ENCODE measurements at regions of chr20 and their contacts with region 1.

Region 1: DNA sequence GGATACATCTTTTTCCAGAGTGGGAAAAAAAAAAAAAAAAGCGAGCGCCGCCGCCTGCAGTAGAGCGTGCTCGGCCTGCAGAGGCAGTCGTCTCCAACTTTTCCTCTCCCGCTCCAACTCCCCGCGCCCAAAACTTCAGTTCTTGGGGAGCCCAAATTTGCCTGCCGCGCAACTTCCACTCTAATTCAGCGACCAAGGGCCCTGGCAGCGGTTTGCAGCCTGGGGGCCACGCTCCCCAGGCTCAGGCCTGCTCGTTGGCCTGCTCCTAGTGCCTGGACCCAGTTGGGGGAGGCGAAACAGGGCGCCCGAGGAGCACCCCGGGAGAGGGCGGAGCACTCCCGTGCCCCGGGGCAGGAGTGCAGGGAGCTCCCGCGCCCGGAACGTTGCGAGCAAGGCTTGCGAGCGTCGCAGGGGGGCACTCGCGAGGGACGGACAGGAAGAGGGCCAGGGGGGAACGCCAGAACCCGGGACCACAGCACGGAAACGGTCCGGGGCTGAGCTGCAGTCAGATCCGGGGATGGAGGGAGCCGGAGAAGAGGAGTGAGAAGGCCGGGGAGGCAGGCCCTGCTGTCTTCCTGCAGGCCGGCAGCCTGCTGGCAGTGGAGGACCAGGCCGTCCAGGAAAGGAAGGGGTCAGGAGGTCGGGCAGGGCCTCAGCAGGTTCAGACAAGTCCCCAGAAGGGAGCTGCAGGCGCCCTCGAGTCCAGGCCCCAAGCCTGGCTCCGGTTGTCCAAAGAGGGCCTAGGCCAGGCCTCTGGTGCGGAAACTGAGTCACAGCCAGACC is at the start of gene STX16:
- DNase-seq: peak; percentile 90
- ATAC-seq: peak; percentile 86
- H3K4me3 Mint-ChIP-seq: peak within 1 kb of the TSS; percentile 93
- H3K27ac Mint-ChIP-seq: peak within 1 kb of the TSS; percentile 95
- H3K4me1 Mint-ChIP-seq: peaks cover 14% of the 10 kb centered on the region
- H3K27me3 Mint-ChIP-seq: no peaks in the 10 kb centered on the region
- CTCF ChIP-seq: peak; percentile 89
- total RNA-seq, gene STX16: 108 to 109 TPM

Region 2: GRCh38 chr20:58309575-58310290 is 341.2 kb before region 1 on chr20 and contains the start of gene RAB22A:
- CTCF ChIA-PET with region 1: no interaction called
- POLR2A ChIA-PET with region 1: interaction called, 3 read pairs
- intact Hi-C with region 1: loop called (anchors 5 kb)
- DNase-seq: peak; percentile 84
- ATAC-seq: peak; percentile 50
- H3K4me3 Mint-ChIP-seq: peak within 1 kb of the TSS; percentile 91
- H3K27ac Mint-ChIP-seq: peak within 1 kb of the TSS; percentile 93
- H3K4me1 Mint-ChIP-seq: peaks cover 60% of the 10 kb centered on the region
- H3K27me3 Mint-ChIP-seq: no peaks in the 10 kb centered on the region
- CTCF ChIP-seq: no peak
- total RNA-seq, gene RAB22A: 8.3 to 9.0 TPM

Region 3: GRCh38 chr20:58407966-58408557 is 242.9 kb before region 1 on chr20:
- CTCF ChIA-PET with region 1: no interaction called
- POLR2A ChIA-PET with region 1: no interaction called
- intact Hi-C with region 1: no loop called
- DNase-seq: peak; percentile 43
- ATAC-seq: peak; percentile 87
- H3K4me3 Mint-ChIP-seq: peak overlapping the region; percentile 16
- H3K27ac Mint-ChIP-seq: peak overlapping the region; percentile 87
- H3K4me1 Mint-ChIP-seq: peaks cover 40% of the 10 kb centered on the region
- H3K27me3 Mint-ChIP-seq: no peaks in the 10 kb centered on the region
- CTCF ChIP-seq: no peak

Region 4: DNA sequence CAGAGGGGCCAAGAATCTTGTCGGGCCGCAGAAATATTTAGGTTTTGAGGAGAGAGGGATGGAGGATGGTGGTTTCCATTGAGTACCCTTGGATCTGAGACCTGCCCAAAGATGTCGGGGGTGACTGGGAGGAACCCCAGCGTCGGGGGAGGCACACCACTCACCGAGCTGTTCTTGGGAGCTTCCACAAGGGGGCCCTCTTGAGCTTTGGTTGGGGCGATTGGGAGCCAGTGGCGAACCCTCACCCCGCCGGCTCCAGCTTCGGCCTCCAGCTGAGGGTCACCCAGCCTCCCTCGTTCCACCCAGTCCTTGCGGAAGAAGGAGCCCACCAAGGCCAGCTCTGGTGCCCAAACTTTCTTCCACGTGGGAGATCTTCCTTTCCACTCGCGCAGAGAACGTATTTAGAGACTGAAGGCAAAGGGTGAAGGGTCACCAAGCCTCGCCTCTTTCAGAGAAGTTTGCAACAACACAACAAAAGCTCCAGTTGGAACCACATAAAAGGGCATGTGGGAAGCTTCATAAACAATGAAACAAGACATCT is 169.4 kb before region 1 on chr20:
- CTCF ChIA-PET with region 1: interaction called, 24 read pairs
- POLR2A ChIA-PET with region 1: interaction called, 5 read pairs
- intact Hi-C with region 1: loop called (anchors 10 kb)
- DNase-seq: peak; percentile 68
- ATAC-seq: peak; percentile 94
- H3K4me3 Mint-ChIP-seq: no peak overlapping the region
- H3K27ac Mint-ChIP-seq: no peak overlapping the region
- H3K4me1 Mint-ChIP-seq: no peaks in the 10 kb centered on the region
- H3K27me3 Mint-ChIP-seq: peaks cover 8% of the 10 kb centered on the region
- CTCF ChIP-seq: peak; percentile 86

Region 5: DNA sequence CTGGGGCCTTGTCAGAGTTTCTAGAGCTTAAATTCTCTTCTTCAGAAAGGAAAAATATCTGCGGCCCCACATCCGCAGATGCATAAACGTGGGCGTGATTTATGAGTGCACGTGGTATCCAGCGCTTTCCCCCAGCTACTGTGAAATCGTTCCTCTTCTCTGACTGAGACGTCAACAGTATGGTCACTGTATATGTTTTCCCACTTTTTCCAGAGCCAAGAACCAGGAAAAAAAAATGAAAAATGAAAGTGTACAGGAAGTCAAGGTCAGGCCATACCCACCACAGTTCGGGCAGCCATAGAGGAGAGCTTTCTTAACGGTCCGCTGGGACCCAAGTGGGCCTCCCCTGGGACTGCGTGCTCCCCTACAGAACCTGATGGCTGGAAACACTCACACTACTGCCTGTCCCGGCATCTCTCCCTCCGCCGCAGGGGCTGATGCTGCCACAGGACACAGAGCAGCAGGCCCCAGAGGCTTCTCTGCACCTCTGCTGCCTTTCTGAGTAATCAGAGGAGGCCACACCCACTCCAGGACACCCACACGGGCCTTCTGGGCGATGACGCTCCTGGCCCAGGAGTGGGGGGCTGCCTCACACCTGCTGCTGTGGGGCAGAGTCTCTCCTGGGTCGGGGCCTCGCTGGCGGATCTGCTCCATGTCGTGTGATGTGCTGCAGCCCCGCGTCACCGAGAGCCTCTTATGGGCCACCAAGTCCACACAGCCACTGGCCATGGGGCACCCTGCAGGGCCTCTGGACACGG is 16.3 kb before region 1 on chr20:
- CTCF ChIA-PET with region 1: interaction called, 10 read pairs
- POLR2A ChIA-PET with region 1: interaction called, 16 read pairs
- intact Hi-C with region 1: no loop called
- DNase-seq: peak; percentile 84
- ATAC-seq: peak; percentile 91
- H3K4me3 Mint-ChIP-seq: peak overlapping the region; percentile 60
- H3K27ac Mint-ChIP-seq: peak overlapping the region; percentile 96
- H3K4me1 Mint-ChIP-seq: peaks cover 29% of the 10 kb centered on the region
- H3K27me3 Mint-ChIP-seq: no peaks in the 10 kb centered on the region
- CTCF ChIP-seq: no peak

Region 6: GRCh38 chr20:58692594-58693226 is 41.7 kb after region 1 on chr20 and contains the start of gene NPEPL1:
- CTCF ChIA-PET with region 1: interaction called, 11 read pairs
- POLR2A ChIA-PET with region 1: interaction called, 3 read pairs
- intact Hi-C with region 1: loop called (anchors 5 kb)
- DNase-seq: peak; percentile 61
- ATAC-seq: peak; percentile 98
- H3K4me3 Mint-ChIP-seq: peak within 1 kb of the TSS; percentile 70
- H3K27ac Mint-ChIP-seq: peak within 1 kb of the TSS; percentile 73
- H3K4me1 Mint-ChIP-seq: peaks cover 15% of the 10 kb centered on the region
- H3K27me3 Mint-ChIP-seq: no peaks in the 10 kb centered on the region
- CTCF ChIP-seq: no peak
- total RNA-seq, gene NPEPL1: 15.4 to 17.1 TPM

Region 7: GRCh38 chr20:58839474-58839874 is 188.5 kb after region 1 on chr20:
- CTCF ChIA-PET with region 1: interaction called, 12 read pairs
- POLR2A ChIA-PET with region 1: interaction called, 3 read pairs
- intact Hi-C with region 1: loop called (anchors 5 kb)
- DNase-seq: peak; percentile 68
- ATAC-seq: peak; percentile 72
- H3K4me3 Mint-ChIP-seq: peak overlapping the region; percentile 46
- H3K27ac Mint-ChIP-seq: no peak overlapping the region
- H3K4me1 Mint-ChIP-seq: peaks cover 25% of the 10 kb centered on the region
- H3K27me3 Mint-ChIP-seq: peaks cover 41% of the 10 kb centered on the region
- CTCF ChIP-seq: peak; percentile 55

Region 8: GRCh38 chr20:58888521-58889333 is 237.8 kb after region 1 on chr20:
- CTCF ChIA-PET with region 1: no interaction called
- POLR2A ChIA-PET with region 1: interaction called, 13 read pairs
- intact Hi-C with region 1: no loop called
- DNase-seq: peak; percentile 89
- ATAC-seq: peak; percentile 51
- H3K4me3 Mint-ChIP-seq: peak overlapping the region; percentile 77
- H3K27ac Mint-ChIP-seq: peak overlapping the region; percentile 81
- H3K4me1 Mint-ChIP-seq: peaks cover 22% of the 10 kb centered on the region
- H3K27me3 Mint-ChIP-seq: no peaks in the 10 kb centered on the region
- CTCF ChIP-seq: no peak

Measured in activated CD8-positive, alpha-beta T cell treated with anti-CD3 and anti-CD28 coated beads for 36 hours (primary cell).